GM10248 (cell line): ENCODE measurements at regions of chr3 and their contacts with region 1.

Region 1: GRCh38 chr3:69410250-69410649 is 24.4 kb upstream of the FRMD4B start:
- DNase-seq: peak; percentile 43
- CTCF ChIP-seq: peak; percentile 90

Region 2: GRCh38 chr3:68866157-68866556 is 544.1 kb before region 1 on chr3:
- CTCF ChIA-PET with region 1: no interaction called
- POLR2A ChIA-PET with region 1: no interaction called
- DNase-seq: no peak
- CTCF ChIP-seq: no peak

Region 3: DNA sequence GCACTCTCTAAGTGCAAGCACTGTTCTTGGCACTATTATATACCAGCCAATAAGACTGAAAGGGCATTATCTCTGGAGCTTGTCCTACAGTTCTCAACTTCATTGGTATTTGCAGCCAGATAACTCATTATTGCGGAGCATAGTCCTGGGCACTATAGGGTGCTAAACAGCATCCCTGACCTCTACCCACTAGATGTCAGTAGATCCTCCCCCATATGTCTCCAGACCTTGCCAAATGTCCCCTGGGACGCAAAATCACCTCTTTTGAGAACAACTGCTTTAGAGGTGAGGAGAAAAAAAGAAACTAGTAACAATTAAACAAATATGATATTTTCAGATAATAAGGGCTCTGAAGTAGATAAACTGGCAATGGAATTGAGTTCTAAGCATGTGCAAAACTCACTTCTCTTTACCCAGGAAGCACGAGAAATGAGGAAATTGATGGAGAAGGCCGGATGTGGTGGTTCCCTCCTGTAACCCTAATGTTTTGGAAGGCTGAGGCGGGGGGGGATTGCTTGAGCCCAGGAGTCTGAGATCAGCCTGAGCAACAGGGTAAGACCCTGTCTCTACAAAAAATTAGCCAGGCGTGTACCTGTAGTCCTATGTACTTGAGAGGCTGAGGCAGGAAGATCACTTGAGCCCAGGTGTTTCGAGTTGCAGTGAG is 85.8 kb before region 1 on chr3:
- CTCF ChIA-PET with region 1: interaction called, 30 read pairs
- POLR2A ChIA-PET with region 1: no interaction called
- DNase-seq: no peak
- CTCF ChIP-seq: peak; percentile 46

Region 4: DNA sequence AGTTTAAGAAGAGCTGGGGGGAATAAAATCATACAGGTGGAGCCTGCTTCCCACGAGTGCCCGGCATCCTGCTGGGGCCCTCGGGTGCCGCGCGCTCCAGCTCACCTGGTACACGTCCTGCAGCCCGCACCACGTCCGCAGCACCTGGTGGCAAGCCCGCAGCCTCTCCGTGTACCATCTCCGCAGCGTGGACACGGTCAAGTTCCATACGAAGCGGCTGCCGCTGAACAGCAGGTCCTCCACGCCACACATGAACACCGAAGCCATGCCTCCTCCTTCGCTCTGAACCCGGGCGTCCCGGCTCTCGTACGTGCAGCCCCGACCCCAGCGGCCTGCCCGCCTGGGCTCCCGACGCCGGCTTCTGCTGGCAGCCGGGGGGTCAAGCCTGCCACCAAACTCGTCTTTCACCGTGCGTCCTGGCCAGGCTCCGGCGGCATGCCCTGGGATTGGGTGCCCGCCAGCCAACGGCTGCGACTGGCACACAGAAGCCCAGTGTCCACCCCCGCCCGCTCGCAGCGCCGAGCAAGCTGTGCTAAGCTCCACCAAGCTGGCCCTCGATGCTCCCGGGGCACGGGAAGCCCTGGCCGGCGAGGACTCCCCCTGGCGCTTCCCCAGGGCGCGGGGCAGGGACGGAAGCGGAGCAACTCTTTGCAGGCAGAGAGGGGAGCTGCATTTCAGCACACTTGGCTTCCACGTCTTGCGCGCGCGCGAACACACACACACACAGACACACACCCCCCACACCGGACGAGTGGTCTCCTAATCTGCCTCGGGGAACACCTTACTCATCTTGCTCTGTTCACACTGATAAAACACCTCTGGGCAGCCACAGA is 24.3 kb before region 1 on chr3 and contains the start of gene FRMD4B:
- CTCF ChIA-PET with region 1: interaction called, 20 read pairs
- POLR2A ChIA-PET with region 1: no interaction called
- DNase-seq: peak; percentile 55
- CTCF ChIP-seq: peak; percentile 32

Region 5: GRCh38 chr3:69425261-69425660 is 15.0 kb after region 1 on chr3:
- CTCF ChIA-PET with region 1: interaction called, 54 read pairs
- POLR2A ChIA-PET with region 1: no interaction called
- DNase-seq: peak; percentile 37
- CTCF ChIP-seq: peak; percentile 51

Region 6: DNA sequence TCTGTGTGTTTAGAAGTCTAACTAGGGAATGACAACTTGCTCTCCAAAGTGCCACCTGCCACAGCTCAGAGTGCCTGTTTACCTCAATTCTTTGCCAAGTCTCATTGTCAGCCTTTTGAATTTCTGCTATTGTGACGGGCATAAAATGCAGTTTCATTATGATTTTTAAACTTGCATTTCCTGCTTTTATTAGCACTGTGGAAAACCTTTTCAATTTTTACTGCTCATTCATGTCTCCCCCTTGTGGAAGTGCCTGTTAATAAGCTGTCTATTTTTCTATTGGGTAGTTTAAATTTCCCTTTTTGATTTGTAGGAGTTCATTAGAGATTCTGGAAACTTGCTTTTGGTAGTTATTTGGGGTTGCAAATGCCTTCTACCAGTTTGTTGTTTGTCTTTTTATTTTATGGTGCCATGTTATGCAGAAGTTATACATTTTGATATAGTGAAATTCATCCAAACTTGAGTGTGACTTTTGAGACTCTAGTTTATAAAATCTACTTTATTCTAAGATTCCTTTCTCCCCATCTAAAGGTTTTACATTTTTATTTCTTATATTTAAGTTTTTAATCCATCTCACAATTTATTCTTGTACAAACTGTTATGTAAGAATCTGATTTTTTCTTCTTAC is 29.5 kb after region 1 on chr3:
- CTCF ChIA-PET with region 1: interaction called, 11 read pairs
- POLR2A ChIA-PET with region 1: no interaction called
- DNase-seq: peak; percentile 13
- CTCF ChIP-seq: peak; percentile 59